B cell (primary cell): ENCODE measurements at regions of chr5 and their contacts with region 1.

Region 1: DNA sequence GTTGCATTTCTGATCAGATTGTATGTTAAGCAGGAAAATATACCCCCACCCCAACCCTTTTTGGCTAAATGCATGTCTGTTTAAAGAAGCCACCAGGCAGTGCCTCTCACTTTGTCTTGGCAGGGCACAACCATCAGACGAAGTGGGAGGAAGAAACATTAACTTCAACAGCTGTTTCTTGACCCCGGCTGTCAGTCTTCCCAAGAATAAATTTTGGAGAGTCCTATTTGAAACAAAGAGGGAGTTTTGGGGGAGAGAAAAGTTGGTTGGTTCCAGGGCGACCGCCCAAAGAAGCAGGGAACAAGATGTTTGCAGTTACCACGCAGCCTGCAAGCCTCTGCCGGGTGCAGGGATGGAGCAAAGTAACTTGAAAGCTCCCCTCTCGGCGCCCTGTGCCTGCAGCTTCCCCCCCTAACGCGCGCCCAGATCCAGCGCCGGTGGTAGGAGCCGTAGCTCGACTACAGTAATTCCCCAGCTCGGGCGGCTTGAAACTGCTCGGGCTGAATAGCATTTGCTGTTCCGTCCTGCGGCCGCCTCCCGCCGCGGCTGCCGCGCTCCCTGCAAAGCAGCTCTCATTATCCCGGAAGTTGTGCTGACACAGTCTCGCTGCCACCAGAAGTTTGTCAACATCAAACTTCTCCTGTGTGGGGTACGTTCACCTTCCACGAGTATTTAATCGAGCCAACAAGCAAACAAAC is 100.7 kb upstream of the SSBP2 start:
- DNase-seq: peak; percentile 90
- ATAC-seq: peak; percentile 89
- H3K4me3 ChIP-seq: peak overlapping the region; percentile 49 to 75 (median 71)
- H3K4me3 Mint-ChIP-seq: peak overlapping the region; percentile 99
- H3K27ac ChIP-seq: peak overlapping the region; percentile 34 to 67
- H3K27ac Mint-ChIP-seq: peak overlapping the region; percentile 98
- H3K4me1 ChIP-seq: peaks cover 17 to 24% of the 10 kb centered on the region in 2 donors
- H3K4me1 Mint-ChIP-seq: peaks cover 33% of the 10 kb centered on the region
- H3K27me3 ChIP-seq: no peaks in the 10 kb centered on the region
- H3K27me3 Mint-ChIP-seq: no peaks in the 10 kb centered on the region
- CTCF ChIP-seq: no peak

Region 2: GRCh38 chr5:81506900-81507588 is 344.6 kb before region 1 on chr5:
- CTCF ChIA-PET with region 1: interaction called, 3 read pairs
- POLR2A ChIA-PET with region 1: interaction called, 3 read pairs
- intact Hi-C with region 1: loop called (anchors 1 kb)
- DNase-seq: peak; percentile 79
- ATAC-seq: peak; percentile 100
- H3K4me3 ChIP-seq: no peak overlapping the region
- H3K4me3 Mint-ChIP-seq: no peak overlapping the region
- H3K27ac ChIP-seq: no peak overlapping the region
- H3K27ac Mint-ChIP-seq: no peak overlapping the region
- H3K4me1 ChIP-seq: no peaks in the 10 kb centered on the region
- H3K4me1 Mint-ChIP-seq: peaks cover 4% of the 10 kb centered on the region
- H3K27me3 ChIP-seq: no peaks in the 10 kb centered on the region
- H3K27me3 Mint-ChIP-seq: no peaks in the 10 kb centered on the region
- CTCF ChIP-seq: peak; percentile 80

Region 3: DNA sequence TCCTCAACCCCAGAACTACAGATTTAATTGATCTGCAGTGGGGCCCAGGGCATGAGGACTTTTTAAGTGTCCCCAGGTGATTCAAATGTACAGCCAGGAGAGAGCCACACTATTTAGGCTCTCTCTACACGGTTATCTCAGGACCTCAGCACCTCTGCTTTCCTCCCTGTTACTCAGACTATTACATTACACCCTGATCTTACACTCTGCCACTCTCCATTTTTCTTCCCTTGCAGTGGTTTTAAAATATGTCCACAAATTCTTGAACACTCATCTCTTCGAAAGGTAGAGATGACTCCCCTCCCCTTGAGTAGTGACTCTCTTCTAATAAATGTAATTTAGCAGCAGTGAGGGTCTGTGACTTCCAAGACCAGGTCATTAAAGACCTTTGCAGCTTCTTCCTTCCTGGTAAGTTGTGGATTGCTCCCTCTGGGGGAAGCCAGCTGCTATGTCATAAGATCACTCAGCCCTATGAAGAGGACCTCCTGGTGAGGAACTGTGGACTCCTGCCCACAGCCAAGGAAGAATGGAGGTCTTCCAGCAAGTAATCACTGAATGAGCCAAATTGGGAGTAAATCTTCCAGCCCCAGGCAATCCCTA is 13.2 kb before region 1 on chr5:
- CTCF ChIA-PET with region 1: interaction called, 32 read pairs
- POLR2A ChIA-PET with region 1: interaction called, 7 read pairs
- intact Hi-C with region 1: no loop called
- DNase-seq: peak; percentile 51
- ATAC-seq: peak; percentile 66
- H3K4me3 ChIP-seq: no peak overlapping the region
- H3K4me3 Mint-ChIP-seq: no peak overlapping the region
- H3K27ac ChIP-seq: no peak overlapping the region
- H3K27ac Mint-ChIP-seq: no peak overlapping the region
- H3K4me1 ChIP-seq: no peaks in the 10 kb centered on the region
- H3K4me1 Mint-ChIP-seq: no peaks in the 10 kb centered on the region
- H3K27me3 ChIP-seq: no peaks in the 10 kb centered on the region
- H3K27me3 Mint-ChIP-seq: no peaks in the 10 kb centered on the region
- CTCF ChIP-seq: peak; percentile 41

Region 4: GRCh38 chr5:81936066-81936465 is 84.4 kb after region 1 on chr5:
- CTCF ChIA-PET with region 1: no interaction called
- POLR2A ChIA-PET with region 1: no interaction called
- intact Hi-C with region 1: no loop called
- DNase-seq: no peak
- ATAC-seq: no peak
- H3K4me3 ChIP-seq: no peak overlapping the region
- H3K4me3 Mint-ChIP-seq: no peak overlapping the region
- H3K27ac ChIP-seq: no peak overlapping the region
- H3K27ac Mint-ChIP-seq: no peak overlapping the region
- H3K4me1 ChIP-seq: no peaks in the 10 kb centered on the region
- H3K4me1 Mint-ChIP-seq: no peaks in the 10 kb centered on the region
- H3K27me3 ChIP-seq: no peaks in the 10 kb centered on the region
- H3K27me3 Mint-ChIP-seq: no peaks in the 10 kb centered on the region
- CTCF ChIP-seq: no peak

Region 5: DNA sequence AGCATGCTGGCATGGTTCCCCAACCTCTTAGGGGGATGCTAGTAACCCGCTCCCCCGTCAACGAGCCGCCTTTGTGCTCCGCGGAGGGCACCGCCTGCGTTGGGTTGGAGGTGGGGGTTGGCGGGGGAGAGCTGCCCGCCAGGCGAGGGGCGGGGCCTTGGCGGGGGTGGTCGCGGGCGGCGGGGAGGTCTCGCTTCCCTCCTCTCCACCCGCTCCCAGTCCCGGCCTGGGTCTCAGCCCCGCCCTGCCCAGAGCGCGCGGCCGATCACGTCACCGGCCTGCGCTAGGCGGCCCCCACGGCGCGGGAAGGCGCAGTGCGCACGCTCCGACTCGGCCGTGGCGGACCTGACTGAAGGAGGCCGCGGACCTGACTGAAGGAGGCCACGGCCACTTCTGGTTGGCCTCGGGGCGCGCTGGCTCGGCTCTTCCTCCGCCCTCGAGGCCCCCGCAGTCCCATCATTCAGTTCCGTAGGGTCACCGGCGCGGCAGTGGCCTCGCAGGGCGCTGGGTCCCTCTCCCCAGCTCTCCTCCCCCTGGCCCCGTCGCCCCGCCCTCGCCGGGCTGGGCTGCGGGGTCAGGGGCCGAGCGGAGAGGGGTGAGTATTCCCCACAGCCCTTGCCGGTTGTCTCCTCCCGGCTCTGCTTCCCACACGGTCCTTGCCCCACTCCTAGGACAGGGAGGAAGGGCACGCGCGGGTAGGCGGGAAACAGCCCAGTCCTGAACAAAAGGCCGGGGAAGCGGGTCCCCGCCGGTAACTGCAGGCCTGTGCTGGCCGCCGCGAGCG is 120.3 kb after region 1 on chr5 and contains the start of gene ATG10:
- CTCF ChIA-PET with region 1: no interaction called
- POLR2A ChIA-PET with region 1: interaction called, 8 read pairs
- intact Hi-C with region 1: loop called (anchors 1 kb)
- DNase-seq: peak; percentile 94
- ATAC-seq: peak; percentile 91
- H3K4me3 ChIP-seq: peak within 1 kb of the TSS; percentile 70 to 99 (median 80)
- H3K4me3 Mint-ChIP-seq: peak within 1 kb of the TSS; percentile 90
- H3K27ac ChIP-seq: peak within 1 kb of the TSS; percentile 94 to 95
- H3K27ac Mint-ChIP-seq: peak within 1 kb of the TSS; percentile 92
- H3K4me1 ChIP-seq: peaks cover 4 to 7% of the 10 kb centered on the region in 2 donors
- H3K4me1 Mint-ChIP-seq: peaks cover 12% of the 10 kb centered on the region
- H3K27me3 ChIP-seq: no peaks in the 10 kb centered on the region
- H3K27me3 Mint-ChIP-seq: no peaks in the 10 kb centered on the region
- CTCF ChIP-seq: no peak
- total RNA-seq, gene ATG10: 9.8 and 11.6 TPM in 2 replicates

Region 6: GRCh38 chr5:82278095-82278918 is 426.7 kb after region 1 on chr5 and contains the start of gene RPS23:
- CTCF ChIA-PET with region 1: no interaction called
- POLR2A ChIA-PET with region 1: interaction called, 4 read pairs
- intact Hi-C with region 1: loop called (anchors 10 kb)
- DNase-seq: peak; percentile 93
- ATAC-seq: peak; percentile 95
- H3K4me3 ChIP-seq: peak within 1 kb of the TSS; percentile 80 to 98 (median 90)
- H3K4me3 Mint-ChIP-seq: peak within 1 kb of the TSS; percentile 91
- H3K27ac ChIP-seq: peak within 1 kb of the TSS; percentile 82 to 89
- H3K27ac Mint-ChIP-seq: peak within 1 kb of the TSS; percentile 94
- H3K4me1 ChIP-seq: peaks cover 26 to 27% of the 10 kb centered on the region in 2 donors
- H3K4me1 Mint-ChIP-seq: peaks cover 37% of the 10 kb centered on the region
- H3K27me3 ChIP-seq: no peaks in the 10 kb centered on the region
- H3K27me3 Mint-ChIP-seq: no peaks in the 10 kb centered on the region
- CTCF ChIP-seq: no peak
- total RNA-seq, gene RPS23: 3,327 and 3,420 TPM in 2 replicates